Endothelial cell of umbilical vein (primary cell): ENCODE measurements at regions of chr3 and their contacts with region 1.

Region 1: GRCh38 chr3:50245831-50246516 is 10.0 kb downstream of the GNAI2 start:
- DNase-seq: peak; percentile 90
- H3K4me3 ChIP-seq: no peak overlapping the region
- H3K27ac ChIP-seq: peak overlapping the region; percentile 86
- H3K4me1 ChIP-seq: peaks cover 92% of the 10 kb centered on the region
- H3K27me3 ChIP-seq: no peaks in the 10 kb centered on the region
- CTCF ChIP-seq: peak; percentile 98 to 99
- POLR2A ChIP-seq: peak; percentile 6

Region 2: DNA sequence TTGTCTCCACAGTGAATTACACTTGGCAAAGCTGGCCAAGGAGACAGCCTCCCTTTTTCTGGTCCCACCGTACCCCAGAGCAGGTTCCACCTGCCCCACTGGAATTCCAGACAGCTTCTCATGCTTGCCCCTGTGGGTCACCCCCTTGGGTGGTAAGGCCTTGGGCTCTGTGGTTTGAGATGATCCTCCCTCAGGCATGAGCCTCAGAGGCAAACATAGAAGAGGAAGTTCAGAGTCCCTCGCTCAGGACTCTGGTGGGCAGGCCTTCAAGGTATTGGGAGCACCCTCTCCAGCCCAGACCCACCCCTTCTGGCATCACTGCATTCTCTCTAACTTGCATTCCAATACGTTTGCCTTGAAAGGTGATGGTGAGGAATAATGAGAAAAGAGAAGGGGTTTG is 414.6 kb before region 1 on chr3:
- CTCF ChIA-PET with region 1: no interaction called
- POLR2A ChIA-PET with region 1: no interaction called
- dilution Hi-C with region 1: no loop called
- intact Hi-C with region 1: no loop called
- DNase-seq: no peak
- H3K4me3 ChIP-seq: no peak overlapping the region
- H3K27ac ChIP-seq: no peak overlapping the region
- H3K4me1 ChIP-seq: no peaks in the 10 kb centered on the region
- H3K27me3 ChIP-seq: no peaks in the 10 kb centered on the region
- CTCF ChIP-seq: no peak
- POLR2A ChIP-seq: no peak

Region 3: DNA sequence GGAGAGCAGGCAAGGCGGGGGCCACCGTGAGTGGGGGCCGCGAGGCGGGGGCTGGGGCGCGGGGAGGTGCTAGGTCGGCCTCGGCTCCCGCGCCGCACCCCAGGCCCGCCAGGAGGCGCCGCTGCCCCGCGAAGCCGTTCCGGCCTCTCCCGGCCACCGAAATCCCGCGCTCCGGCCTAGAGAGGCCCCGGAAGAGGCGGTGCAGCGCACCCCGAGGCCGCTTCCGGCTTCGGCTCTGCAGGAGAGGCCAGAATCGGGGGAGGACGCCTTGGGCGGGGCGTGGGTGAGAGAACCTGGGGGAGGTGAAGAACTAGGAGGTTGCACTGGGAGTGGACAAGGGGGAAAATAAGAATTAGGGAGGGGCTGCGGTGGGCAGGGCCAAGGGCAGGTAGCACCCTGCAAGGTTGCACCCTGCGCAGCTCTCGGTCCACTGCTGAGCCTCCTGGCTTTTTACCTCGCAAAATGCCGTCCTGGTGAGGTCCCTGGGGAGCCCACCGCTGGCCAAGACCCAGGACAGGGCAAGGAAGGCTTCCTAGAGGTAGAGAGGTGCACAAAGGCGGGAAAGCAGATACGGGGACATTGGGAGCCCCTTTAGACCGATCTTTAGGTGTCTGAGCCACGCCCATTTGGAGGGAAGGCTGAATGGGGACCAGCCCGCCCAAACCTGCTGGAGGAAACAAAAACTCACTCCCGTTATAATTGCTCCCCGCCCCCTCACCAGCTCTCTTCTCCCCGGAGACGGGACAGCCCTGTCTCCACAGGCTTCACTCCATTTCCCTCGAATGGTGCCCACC is 18.4 kb before region 1 on chr3:
- CTCF ChIA-PET with region 1: interaction called, 134 read pairs
- POLR2A ChIA-PET with region 1: interaction called, 5 read pairs
- dilution Hi-C with region 1: no loop called
- intact Hi-C with region 1: loop called (anchors 1 kb)
- DNase-seq: peak; percentile 62
- H3K4me3 ChIP-seq: peak overlapping the region; percentile 19 to 50 (median 33)
- H3K27ac ChIP-seq: no peak overlapping the region
- H3K4me1 ChIP-seq: peaks cover 13% of the 10 kb centered on the region
- H3K27me3 ChIP-seq: no peaks in the 10 kb centered on the region
- CTCF ChIP-seq: peak; percentile 66 to 76
- POLR2A ChIP-seq: peak; percentile 57

Region 4: GRCh38 chr3:50260027-50260941 is 14.3 kb after region 1 on chr3:
- CTCF ChIA-PET with region 1: interaction called, 68 read pairs
- POLR2A ChIA-PET with region 1: interaction called, 11 read pairs
- dilution Hi-C with region 1: no loop called
- intact Hi-C with region 1: loop called (anchors 1 kb)
- DNase-seq: peak; percentile 93
- H3K4me3 ChIP-seq: peak overlapping the region in 2 of 3 experiments; percentile 25 to 31
- H3K27ac ChIP-seq: peak overlapping the region; percentile 88
- H3K4me1 ChIP-seq: peaks cover 28% of the 10 kb centered on the region
- H3K27me3 ChIP-seq: no peaks in the 10 kb centered on the region
- CTCF ChIP-seq: peak; percentile 97 to 99
- POLR2A ChIP-seq: peak; percentile 88

Region 5: GRCh38 chr3:50298836-50299637 is 53.1 kb after region 1 on chr3 and contains the starts of genes HYAL3 and NAA80:
- CTCF ChIA-PET with region 1: no interaction called
- POLR2A ChIA-PET with region 1: no interaction called
- dilution Hi-C with region 1: no loop called
- intact Hi-C with region 1: loop called (anchors 2 kb)
- DNase-seq: peak; percentile 100
- H3K4me3 ChIP-seq: peak within 1 kb of the TSS; percentile 51 to 69 (median 64)
- H3K27ac ChIP-seq: peak within 1 kb of the TSS; percentile 70
- H3K4me1 ChIP-seq: peaks cover 25% of the 10 kb centered on the region
- H3K27me3 ChIP-seq: no peaks in the 10 kb centered on the region
- CTCF ChIP-seq: peak in 1 of 2 donors; percentile 39
- POLR2A ChIP-seq: peak; percentile 97
- total RNA-seq, gene HYAL3: 3.8 and 4.8 TPM in 2 replicates
- total RNA-seq, gene NAA80: 9.0 and 9.7 TPM in 2 replicates